HCT116 (cell line): ENCODE measurements at regions of chr13 and their contacts with region 1.

Region 1: GRCh38 chr13:77492982-77493381 is 42.5 kb upstream of the SCEL start:
- DNase-seq: peak; percentile 23
- ATAC-seq: peak; percentile 85
- H3K4me3 ChIP-seq: no peak overlapping the region
- H3K27ac ChIP-seq: no peak overlapping the region
- H3K4me1 ChIP-seq: no peaks in the 10 kb centered on the region
- H3K27me3 ChIP-seq: no peaks in the 10 kb centered on the region
- CTCF ChIP-seq: peak; percentile 22 to 62 (median 37); a peak in 4 of 6 replicates
- POLR2A ChIP-seq: no peak
- RAD21 ChIP-seq: peak; percentile 58

Region 2: GRCh38 chr13:77136902-77137420 is 356.0 kb before region 1 on chr13:
- CTCF ChIA-PET with region 1: no interaction called
- POLR2A ChIA-PET with region 1: no interaction called
- RAD21 ChIA-PET with region 1: no interaction called
- intact Hi-C with region 1: no loop called
- DNase-seq: no peak
- ATAC-seq: no peak
- H3K4me3 ChIP-seq: no peak overlapping the region
- H3K27ac ChIP-seq: no peak overlapping the region
- H3K4me1 ChIP-seq: no peaks in the 10 kb centered on the region
- H3K27me3 ChIP-seq: no peaks in the 10 kb centered on the region
- CTCF ChIP-seq: no peak
- POLR2A ChIP-seq: no peak
- RAD21 ChIP-seq: no peak

Region 3: GRCh38 chr13:77480066-77480465 is 12.9 kb before region 1 on chr13:
- CTCF ChIA-PET with region 1: interaction called, 15 read pairs
- POLR2A ChIA-PET with region 1: interaction called, 6 read pairs
- RAD21 ChIA-PET with region 1: no interaction called
- intact Hi-C with region 1: no loop called
- DNase-seq: no peak
- ATAC-seq: no peak
- H3K4me3 ChIP-seq: no peak overlapping the region
- H3K27ac ChIP-seq: no peak overlapping the region
- H3K4me1 ChIP-seq: peaks cover 0 to 7% of the 10 kb centered on the region in 2 experiments; a peak in 2 of 4 replicates
- H3K27me3 ChIP-seq: no peaks in the 10 kb centered on the region
- CTCF ChIP-seq: no peak
- POLR2A ChIP-seq: no peak
- RAD21 ChIP-seq: no peak

Region 4: DNA sequence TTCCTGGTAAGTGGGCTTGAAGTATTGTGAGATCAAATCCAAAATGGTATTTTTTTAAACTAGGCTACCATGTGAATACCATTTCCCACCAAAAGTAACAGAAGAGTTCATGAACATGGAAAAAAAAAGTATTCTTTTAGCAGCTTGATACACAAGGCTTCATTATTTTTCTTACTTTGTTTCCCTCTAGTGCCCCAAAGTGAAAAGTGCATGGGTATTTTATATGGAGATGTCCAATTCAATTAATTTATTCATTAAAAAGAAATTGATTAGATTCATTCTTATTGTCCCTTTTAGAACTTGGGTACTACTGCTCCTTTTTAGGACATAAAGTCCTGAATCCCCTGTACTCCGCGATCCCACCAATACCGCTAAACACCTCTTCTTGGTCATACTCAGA is 13.9 kb after region 1 on chr13:
- CTCF ChIA-PET with region 1: interaction called, 10 read pairs
- POLR2A ChIA-PET with region 1: no interaction called
- RAD21 ChIA-PET with region 1: no interaction called
- intact Hi-C with region 1: no loop called
- DNase-seq: peak; percentile 7
- ATAC-seq: no peak
- H3K4me3 ChIP-seq: no peak overlapping the region; a peak in 1 of 4 replicates
- H3K27ac ChIP-seq: no peak overlapping the region
- H3K4me1 ChIP-seq: peaks cover 15% of the 10 kb centered on the region in 2 experiments; a peak in 3 of 4 replicates
- H3K27me3 ChIP-seq: peaks cover 21% of the 10 kb centered on the region
- CTCF ChIP-seq: peak in 2 of 3 experiments; percentile 10 to 40; a peak in 1 of 6 replicates
- POLR2A ChIP-seq: no peak
- RAD21 ChIP-seq: peak; percentile 34

Region 5: GRCh38 chr13:77565635-77566034 is 72.7 kb after region 1 on chr13:
- CTCF ChIA-PET with region 1: interaction called, 5 read pairs
- POLR2A ChIA-PET with region 1: no interaction called
- RAD21 ChIA-PET with region 1: interaction called in 1 of 2 experiments, 3 read pairs
- intact Hi-C with region 1: loop called (anchors 1 kb)
- DNase-seq: peak; percentile 12
- ATAC-seq: peak; percentile 74; the same call in 1 of the 2 replicates
- H3K4me3 ChIP-seq: no peak overlapping the region
- H3K27ac ChIP-seq: no peak overlapping the region
- H3K4me1 ChIP-seq: no peaks in the 10 kb centered on the region
- H3K27me3 ChIP-seq: no peaks in the 10 kb centered on the region
- CTCF ChIP-seq: peak; percentile 29 to 63 (median 32); a peak in 3 of 6 replicates
- POLR2A ChIP-seq: no peak
- RAD21 ChIP-seq: peak; percentile 64

Region 6: DNA sequence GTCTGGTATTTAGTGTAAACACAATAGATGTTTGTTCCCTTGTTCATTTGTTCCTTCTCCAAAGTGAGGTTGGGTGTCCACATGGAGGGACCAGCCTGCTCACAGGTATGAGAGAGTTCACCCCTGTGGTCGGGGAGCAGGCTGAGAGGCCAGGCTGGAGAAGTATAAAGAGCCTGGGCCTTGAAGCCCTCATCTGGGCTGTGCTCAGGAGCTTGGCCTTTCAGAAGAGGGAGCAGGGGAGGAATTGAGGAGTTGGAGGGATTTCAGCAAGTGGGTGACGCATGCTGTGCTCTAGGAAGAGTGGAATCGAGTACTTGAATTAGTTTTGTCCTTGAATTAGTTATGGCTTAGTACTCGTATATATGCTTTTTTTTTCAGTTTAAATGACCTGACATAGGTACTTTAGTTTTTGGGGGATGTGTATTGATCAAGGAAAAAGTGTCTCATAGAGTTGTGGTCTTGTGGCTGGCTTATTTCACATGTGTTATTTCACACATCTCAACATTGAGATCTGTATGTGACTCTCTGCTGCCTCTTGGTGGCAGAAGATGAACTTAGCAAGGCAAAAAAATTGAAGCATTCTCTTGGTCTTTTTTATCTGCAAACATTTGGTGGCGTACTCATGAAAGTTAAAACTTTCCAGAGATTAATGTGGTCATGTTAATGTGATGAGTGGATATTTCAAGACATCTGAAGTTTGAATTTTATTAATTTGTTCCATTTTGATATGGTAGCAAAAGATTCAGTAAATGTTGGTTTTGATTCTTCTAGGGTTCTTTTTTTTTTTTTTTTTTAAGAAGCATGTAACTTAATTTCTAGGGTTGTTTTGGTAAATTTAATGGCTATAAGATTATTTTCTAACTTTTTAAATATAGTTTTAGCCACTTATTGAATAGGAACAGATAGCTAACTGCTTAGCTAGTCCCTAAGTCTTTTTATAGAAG is 258.8 kb after region 1 on chr13:
- CTCF ChIA-PET with region 1: no interaction called
- POLR2A ChIA-PET with region 1: no interaction called
- RAD21 ChIA-PET with region 1: no interaction called
- intact Hi-C with region 1: loop called (anchors 5 kb)
- DNase-seq: peak; percentile 6
- ATAC-seq: peak; percentile 60
- H3K4me3 ChIP-seq: no peak overlapping the region
- H3K27ac ChIP-seq: no peak overlapping the region
- H3K4me1 ChIP-seq: no peaks in the 10 kb centered on the region
- H3K27me3 ChIP-seq: no peaks in the 10 kb centered on the region
- CTCF ChIP-seq: peak; percentile 53 to 73 (median 54); a peak in 5 of 6 replicates
- POLR2A ChIP-seq: no peak
- RAD21 ChIP-seq: peak; percentile 55

Region 7: GRCh38 chr13:78940455-78941130 is 1447.6 kb after region 1 on chr13:
- CTCF ChIA-PET with region 1: no interaction called
- POLR2A ChIA-PET with region 1: no interaction called
- RAD21 ChIA-PET with region 1: no interaction called
- intact Hi-C with region 1: no loop called
- DNase-seq: no peak
- ATAC-seq: no peak
- H3K4me3 ChIP-seq: no peak overlapping the region
- H3K27ac ChIP-seq: no peak overlapping the region
- H3K4me1 ChIP-seq: no peaks in the 10 kb centered on the region
- H3K27me3 ChIP-seq: 0 out of 2 replicates have a peak, but pooled peaks cover 3% of the 10 kb centered on the region
- CTCF ChIP-seq: no peak
- POLR2A ChIP-seq: no peak
- RAD21 ChIP-seq: no peak